Endothelial cell of umbilical vein (primary cell): ENCODE measurements at regions of chr6 and their contacts with region 1.

Region 1: DNA sequence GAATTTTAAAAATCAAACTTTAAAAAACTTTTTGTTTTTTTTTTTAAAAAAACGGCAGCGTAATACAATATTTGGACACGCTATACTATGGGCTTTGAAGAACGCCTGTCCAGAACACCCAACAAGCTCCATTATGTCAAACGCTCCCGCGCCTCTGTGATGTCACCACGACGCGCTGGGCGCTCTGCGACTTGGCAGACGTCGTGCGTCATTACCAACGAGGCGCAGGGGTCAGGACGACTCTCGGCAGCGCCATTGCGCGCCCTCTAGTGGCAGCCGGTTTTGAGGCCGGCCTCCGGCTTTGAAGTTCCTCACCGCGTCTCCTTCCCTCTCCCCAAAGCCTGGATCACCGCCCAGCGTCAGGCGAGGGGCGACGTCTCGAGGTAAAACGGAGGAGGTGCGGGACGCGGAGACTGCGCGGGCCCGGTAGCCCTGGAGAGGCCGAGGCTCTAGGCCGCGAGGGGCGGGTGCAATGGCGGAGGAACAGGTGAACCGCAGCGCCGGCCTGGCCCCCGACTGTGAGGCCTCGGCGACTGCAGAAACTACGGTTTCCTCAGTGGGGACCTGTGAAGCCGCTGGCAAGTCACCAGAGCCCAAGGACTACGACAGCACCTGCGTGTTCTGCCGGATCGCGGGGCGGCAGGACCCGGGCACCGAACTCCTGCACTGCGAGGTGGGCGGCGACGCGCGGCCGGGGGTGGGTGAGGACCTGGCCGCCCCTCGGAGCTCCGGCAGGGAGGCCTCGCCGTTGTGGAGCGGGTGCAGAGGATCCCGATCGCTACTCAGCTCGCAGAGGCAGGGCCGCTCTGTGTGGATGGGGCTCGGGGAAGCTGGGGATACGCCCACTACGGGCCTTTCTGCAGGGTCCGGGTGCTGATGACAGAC is at the start of gene HINT3:
- DNase-seq: peak; percentile 97
- H3K4me3 ChIP-seq: peak within 1 kb of the TSS; percentile 46 to 74 (median 58)
- H3K27ac ChIP-seq: peak within 1 kb of the TSS; percentile 47
- H3K4me1 ChIP-seq: peaks cover 15% of the 10 kb centered on the region
- H3K27me3 ChIP-seq: no peaks in the 10 kb centered on the region
- CTCF ChIP-seq: peak; percentile 99
- POLR2A ChIP-seq: peak; percentile 52
- total RNA-seq, gene HINT3: 8.4 and 9.7 TPM in 2 replicates

Region 2: DNA sequence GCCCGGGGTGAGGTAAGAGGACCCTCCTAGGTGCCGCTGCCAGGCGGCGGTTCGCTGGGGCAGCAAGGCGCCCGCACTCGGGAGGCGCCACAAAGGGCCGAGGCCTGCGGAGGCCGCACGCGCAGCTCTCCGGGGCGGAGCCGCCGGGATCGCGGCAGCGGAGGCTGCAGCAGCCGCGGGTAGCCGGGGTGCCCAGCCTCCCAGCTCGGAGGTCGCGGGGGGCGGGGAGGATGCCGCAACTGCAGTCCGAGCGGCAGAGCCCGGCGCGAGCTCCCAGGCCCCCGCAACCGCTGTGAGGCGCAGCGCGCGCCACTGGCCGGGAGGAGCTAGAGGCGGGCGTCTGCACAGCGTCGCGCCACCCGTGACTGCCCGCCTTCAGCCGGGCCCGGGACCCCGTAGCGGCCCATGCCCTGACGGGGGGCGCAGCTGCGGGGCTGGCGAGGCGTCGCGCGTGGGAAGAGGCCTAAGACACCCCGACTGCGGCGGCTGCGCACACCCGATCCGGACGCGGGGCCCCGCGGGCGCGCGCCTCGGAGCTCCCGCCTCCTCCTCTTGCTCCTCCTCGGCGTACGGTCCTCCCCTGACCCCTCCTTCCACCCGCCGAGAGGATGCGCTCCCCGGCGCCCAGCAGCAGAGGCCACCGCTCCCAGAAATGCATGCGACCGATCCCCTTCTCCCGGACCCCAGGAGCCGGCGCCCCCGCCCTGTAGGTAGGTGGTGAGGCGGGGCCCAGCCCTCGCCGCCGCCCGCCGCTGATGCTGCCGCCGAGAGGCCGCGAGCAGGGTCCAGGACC is 166.2 kb before region 1 on chr6 and contains the start of gene NCOA7:
- CTCF ChIA-PET with region 1: interaction called, 138 read pairs
- POLR2A ChIA-PET with region 1: interaction called, 8 read pairs
- dilution Hi-C with region 1: no loop called
- intact Hi-C with region 1: loop called (anchors 1 kb)
- DNase-seq: peak; percentile 84
- H3K4me3 ChIP-seq: peak within 1 kb of the TSS; percentile 87 to 96 (median 87)
- H3K27ac ChIP-seq: peak within 1 kb of the TSS; percentile 81
- H3K4me1 ChIP-seq: peaks cover 42% of the 10 kb centered on the region
- H3K27me3 ChIP-seq: no peaks in the 10 kb centered on the region
- CTCF ChIP-seq: no peak
- POLR2A ChIP-seq: peak; percentile 83
- total RNA-seq, gene NCOA7: 58.2 and 71.2 TPM in 2 replicates

Region 3: DNA sequence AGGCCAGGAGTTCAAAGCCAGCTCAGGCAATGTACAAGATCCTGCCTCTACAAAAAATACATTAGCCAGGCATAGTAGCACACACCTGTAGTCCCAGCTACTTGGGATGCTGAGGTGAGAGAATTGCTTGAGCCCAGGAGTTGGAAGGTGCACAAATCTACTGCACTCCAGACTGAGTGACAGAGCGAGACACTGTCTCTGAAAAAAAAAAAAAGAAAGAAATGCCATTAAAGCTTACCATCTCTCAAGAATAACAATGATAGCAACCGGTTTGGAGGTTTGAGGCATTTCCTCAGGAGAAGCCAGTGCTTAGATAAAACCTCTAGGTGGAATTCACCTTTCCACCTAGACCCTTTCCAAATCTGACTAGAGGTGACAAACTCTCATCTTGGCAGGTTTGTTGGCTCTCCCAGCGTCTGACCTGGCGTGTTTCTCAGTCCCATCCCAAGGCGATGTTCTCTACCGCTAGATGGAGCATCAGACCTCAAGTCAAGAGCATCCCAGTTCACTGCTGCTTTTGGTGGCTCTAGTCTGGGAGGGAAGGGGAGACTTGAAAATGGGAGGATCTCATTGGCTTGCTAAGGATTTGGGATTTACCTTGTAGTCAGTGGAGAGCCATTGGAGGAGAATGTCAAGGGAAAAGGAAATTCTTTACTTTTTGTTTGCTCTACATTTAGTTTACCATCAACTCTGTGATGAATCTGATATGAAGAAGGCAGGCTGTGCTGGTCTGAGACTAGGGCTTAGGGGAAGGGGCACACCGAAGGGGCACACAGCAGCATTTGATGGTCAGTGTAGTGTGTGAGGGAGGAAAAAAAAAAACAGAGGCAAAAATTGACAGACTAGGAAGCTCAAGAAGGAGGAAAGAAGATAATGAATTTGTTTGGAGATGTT is 98.1 kb before region 1 on chr6:
- CTCF ChIA-PET with region 1: interaction called, 14 read pairs
- POLR2A ChIA-PET with region 1: no interaction called
- dilution Hi-C with region 1: no loop called
- intact Hi-C with region 1: loop called (anchors 5 kb)
- DNase-seq: peak; percentile 68
- H3K4me3 ChIP-seq: no peak overlapping the region
- H3K27ac ChIP-seq: no peak overlapping the region
- H3K4me1 ChIP-seq: no peaks in the 10 kb centered on the region
- H3K27me3 ChIP-seq: no peaks in the 10 kb centered on the region
- CTCF ChIP-seq: peak; percentile 69 to 73
- POLR2A ChIP-seq: no peak

Region 4: GRCh38 chr6:125913864-125914351 is 42.8 kb before region 1 on chr6:
- CTCF ChIA-PET with region 1: interaction called, 23 read pairs
- POLR2A ChIA-PET with region 1: interaction called, 4 read pairs
- dilution Hi-C with region 1: no loop called
- intact Hi-C with region 1: loop called (anchors 1 kb)
- DNase-seq: peak; percentile 78
- H3K4me3 ChIP-seq: no peak overlapping the region
- H3K27ac ChIP-seq: peak overlapping the region; percentile 15
- H3K4me1 ChIP-seq: peaks cover 39% of the 10 kb centered on the region
- H3K27me3 ChIP-seq: no peaks in the 10 kb centered on the region
- CTCF ChIP-seq: no peak
- POLR2A ChIP-seq: no peak

Region 5: GRCh38 chr6:125944434-125944816 is 12.3 kb before region 1 on chr6:
- CTCF ChIA-PET with region 1: interaction called, 86 read pairs
- POLR2A ChIA-PET with region 1: no interaction called
- dilution Hi-C with region 1: no loop called
- intact Hi-C with region 1: loop called (anchors 1 kb)
- DNase-seq: peak; percentile 98
- H3K4me3 ChIP-seq: no peak overlapping the region
- H3K27ac ChIP-seq: peak overlapping the region; percentile 89
- H3K4me1 ChIP-seq: peaks cover 40% of the 10 kb centered on the region
- H3K27me3 ChIP-seq: no peaks in the 10 kb centered on the region
- CTCF ChIP-seq: no peak
- POLR2A ChIP-seq: no peak

Region 6: GRCh38 chr6:125995972-125996580 is 39.3 kb after region 1 on chr6:
- CTCF ChIA-PET with region 1: interaction called, 10 read pairs
- POLR2A ChIA-PET with region 1: no interaction called
- dilution Hi-C with region 1: no loop called
- intact Hi-C with region 1: no loop called
- DNase-seq: peak; percentile 74
- H3K4me3 ChIP-seq: no peak overlapping the region
- H3K27ac ChIP-seq: no peak overlapping the region
- H3K4me1 ChIP-seq: no peaks in the 10 kb centered on the region
- H3K27me3 ChIP-seq: no peaks in the 10 kb centered on the region
- CTCF ChIP-seq: peak; percentile 84 to 97
- POLR2A ChIP-seq: no peak